Adrenal gland (tissue), 19 donors: ENCODE measurements at regions of chr22 and their contacts with region 1.

Region 1: DNA sequence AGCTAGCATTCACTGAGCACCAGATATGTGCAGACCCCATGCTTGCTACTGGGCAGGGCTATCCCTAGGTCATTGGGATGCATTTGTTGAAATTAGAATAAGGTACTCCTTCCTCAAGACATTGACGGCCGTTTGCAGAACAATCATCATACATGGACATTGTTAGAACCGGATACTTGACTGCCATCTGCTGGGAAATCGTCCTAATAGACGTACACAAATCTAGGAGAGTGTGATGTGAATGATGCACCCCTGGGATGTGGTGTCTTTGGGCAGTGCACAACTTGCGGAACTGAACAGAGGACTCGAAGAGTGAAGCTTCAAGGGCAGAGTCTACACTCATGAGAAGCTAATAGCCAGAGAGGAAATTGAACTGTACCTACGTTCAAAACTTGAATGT is 35.9 kb downstream of the MYO18B start:
- DNase-seq: peak in 4 of 7 donors; percentile 29 to 69 (median 44)
- H3K4me3 ChIP-seq: no peak overlapping the region
- H3K27ac ChIP-seq: no peak overlapping the region
- H3K4me1 ChIP-seq: no peaks in the 10 kb centered on the region
- H3K27me3 ChIP-seq: no peaks in the 10 kb centered on the region
- CTCF ChIP-seq: peak in 5 of 6 experiments; percentile 25 to 48 (median 32)
- POLR2A ChIP-seq: no peak

Region 2: GRCh38 chr22:25729016-25729995 is 48.6 kb before region 1 on chr22:
- intact Hi-C with region 1: loop called in 1 of 2 experiments (anchors 10 kb)
- DNase-seq: peak in 1 of 7 donors; percentile 36
- H3K4me3 ChIP-seq: no peak overlapping the region
- H3K27ac ChIP-seq: no peak overlapping the region
- H3K4me1 ChIP-seq: no peaks in the 10 kb centered on the region
- H3K27me3 ChIP-seq: no peaks in the 10 kb centered on the region
- CTCF ChIP-seq: no peak
- POLR2A ChIP-seq: no peak